Cardiac septum (tissue), 1 donor: ENCODE measurements at regions of chr11 and their contacts with region 1.

Region 1: GRCh38 chr11:4044976-4045646 is 49.5 kb upstream of the RRM1 start:
- DNase-seq: no peak

Region 2: DNA sequence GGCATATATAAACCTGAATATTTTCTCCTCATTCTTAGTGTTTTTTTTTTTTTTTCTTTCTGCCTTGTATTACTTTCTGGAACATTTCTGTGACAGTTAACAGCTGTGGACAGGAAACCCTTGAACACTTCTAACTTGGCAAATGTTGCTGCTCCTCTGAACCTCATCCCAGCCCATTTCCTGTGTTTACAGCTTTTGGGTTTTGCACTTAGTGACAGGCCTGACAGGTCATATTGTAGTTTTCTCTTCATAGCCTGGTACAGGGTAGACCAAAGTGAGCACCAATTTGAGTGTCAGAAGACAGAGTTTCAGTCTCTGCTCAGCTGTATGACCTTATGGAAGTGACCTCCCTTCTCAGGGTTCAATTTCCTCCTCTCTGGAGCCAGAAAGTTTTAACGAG is 98.0 kb before region 1 on chr11:
- intact Hi-C with region 1: loop called (anchors 5 kb)
- DNase-seq: no peak

Region 3: DNA sequence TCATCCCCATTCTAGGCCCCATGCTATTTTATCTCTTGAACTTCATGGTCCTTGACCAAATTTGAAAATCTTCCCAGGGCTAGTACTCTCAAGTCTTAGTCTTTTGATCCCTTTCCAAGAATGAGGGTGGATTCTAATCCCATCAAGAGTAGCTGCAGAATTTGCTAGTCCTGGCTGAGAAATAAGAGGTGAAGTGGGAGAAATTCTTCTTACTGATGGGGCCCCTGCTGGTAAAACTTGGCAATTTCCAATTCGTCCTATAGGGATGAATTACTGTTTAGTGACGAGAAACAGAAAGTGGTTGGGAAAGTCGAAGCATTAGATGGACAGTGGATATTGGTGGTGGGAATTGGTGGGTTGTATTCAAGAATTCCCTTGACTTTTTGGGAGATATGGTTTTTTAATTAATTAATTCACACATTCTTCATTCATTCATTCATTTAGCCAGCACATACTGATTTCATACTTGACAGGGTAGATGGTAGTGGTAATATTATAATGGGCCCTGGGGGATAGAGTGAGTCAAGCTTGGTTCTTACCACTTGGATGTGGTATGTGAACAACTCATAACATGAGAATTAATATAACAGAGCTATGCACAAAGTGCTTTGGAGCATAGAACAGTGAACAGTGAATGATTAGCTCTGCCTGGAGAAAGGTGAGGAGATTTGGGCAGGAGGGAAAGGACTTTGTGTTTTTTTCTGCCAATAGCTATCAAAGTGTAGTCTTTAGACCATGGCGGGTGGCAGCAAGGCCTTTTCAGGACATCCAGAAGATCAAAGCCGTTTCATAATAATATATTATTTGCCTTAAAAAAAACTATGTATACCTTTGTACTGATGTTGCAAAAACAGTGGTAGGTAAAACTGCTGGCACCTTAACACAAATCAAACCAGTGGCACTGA is 85.8 kb before region 1 on chr11:
- intact Hi-C with region 1: loop called (anchors 5 kb)
- DNase-seq: no peak

Region 4: GRCh38 chr11:4065601-4066377 is 20.7 kb after region 1 on chr11:
- intact Hi-C with region 1: loop called (anchors 2 kb)
- DNase-seq: no peak

Region 5: DNA sequence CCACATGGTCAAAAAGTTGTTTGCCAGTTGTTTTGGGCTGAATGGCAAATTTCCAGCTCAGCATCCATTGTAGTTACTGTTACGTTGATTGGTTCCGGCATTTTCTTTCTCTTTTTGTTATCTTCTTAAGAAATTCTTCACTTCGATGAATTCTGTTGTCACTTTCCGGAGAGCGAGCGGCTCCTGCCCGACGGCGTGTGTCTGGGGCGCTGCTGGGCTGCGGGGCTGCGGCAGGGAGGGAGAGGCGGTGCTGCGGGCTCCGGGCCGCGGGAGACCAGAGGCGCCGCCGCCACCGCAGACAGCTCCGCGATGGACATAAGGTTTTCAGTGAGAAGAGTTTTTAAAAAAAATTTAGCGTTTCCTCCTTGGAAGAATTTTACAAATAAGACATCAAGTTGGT is 166.9 kb after region 1 on chr11:
- intact Hi-C with region 1: no loop called
- DNase-seq: no peak